Ovary (tissue), 10 donors: ENCODE measurements at regions of chr9 and their contacts with region 1.

Region 1: GRCh38 chr9:37953775-37954437 is 50.0 kb upstream of the SLC25A51 start:
- DNase-seq: peak; percentile 36 to 70 (median 63)
- H3K4me3 ChIP-seq: no peak overlapping the region
- H3K27ac ChIP-seq: no peak overlapping the region
- H3K4me1 ChIP-seq: no peaks in the 10 kb centered on the region
- H3K27me3 ChIP-seq: no peaks in the 10 kb centered on the region
- CTCF ChIP-seq: no peak
- EP300 ChIP-seq: no peak
- POLR2A ChIP-seq: no peak

Region 2: GRCh38 chr9:38017149-38017884 is 63.4 kb after region 1 on chr9:
- intact Hi-C with region 1: loop called in 1 of 4 experiments (anchors 10 kb)
- DNase-seq: no peak
- H3K4me3 ChIP-seq: no peak overlapping the region
- H3K27ac ChIP-seq: no peak overlapping the region
- H3K4me1 ChIP-seq: peaks cover 6% of the 10 kb centered on the region
- H3K27me3 ChIP-seq: no peaks in the 10 kb centered on the region
- CTCF ChIP-seq: no peak
- EP300 ChIP-seq: no peak
- POLR2A ChIP-seq: no peak